ENCODE measurements at regions of chr4 and their contacts with region 1.

Region 1: GRCh38 chr4:86908251-86908657 is 16.0 kb upstream of the C4orf36 start:
- DNase-seq: no peak

Region 2: DNA sequence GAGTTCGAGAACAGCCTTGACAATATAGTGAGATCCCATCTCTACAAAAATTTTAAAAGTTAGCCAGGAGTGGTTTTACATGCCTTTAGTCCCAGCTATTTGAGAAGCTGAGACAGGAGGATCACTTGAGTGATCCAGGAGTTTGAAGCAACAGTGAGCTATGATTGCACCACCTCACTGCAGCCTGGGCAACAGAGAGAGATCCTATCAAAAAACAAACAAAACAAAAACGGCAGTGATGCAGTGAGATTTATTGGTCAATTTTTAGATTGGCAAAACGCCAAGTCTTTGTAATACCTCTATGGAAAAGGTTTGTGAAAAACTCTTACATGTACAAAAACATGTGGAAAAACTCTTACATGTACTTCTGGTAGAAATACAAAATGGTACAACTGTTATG is 222.9 kb before region 1 on chr4:
- in situ Hi-C with region 1: no loop called
- DNase-seq: no peak

Region 3: GRCh38 chr4:86991994-86992393 is 83.7 kb after region 1 on chr4:
- in situ Hi-C with region 1: no loop called
- DNase-seq: no peak

Region 4: GRCh38 chr4:87108142-87108546 is 199.9 kb after region 1 on chr4:
- in situ Hi-C with region 1: loop called (anchors 25 kb)
- DNase-seq: peak; percentile 16